ENCODE measurements at regions of chr19 and their contacts with region 1.

Region 1: GRCh38 chr19:49712397-49712859 is 21.5 kb downstream of the CPT1C start:
- DNase-seq: peak; percentile 86 to 96
- ATAC-seq: peak; percentile 80 to 87
- H3K4me3 ChIP-seq: peak overlapping the region; percentile 47
- H3K27ac ChIP-seq: peak overlapping the region; percentile 77 to 81
- H3K4me1 ChIP-seq: peaks cover 9% of the 10 kb centered on the region; the same call in 2 of the 3 replicates
- CTCF ChIP-seq: no peak
- EP300 ChIP-seq: no peak
- POLR2A ChIP-seq: no peak
- RAD21 ChIP-seq: no peak

Region 2: DNA sequence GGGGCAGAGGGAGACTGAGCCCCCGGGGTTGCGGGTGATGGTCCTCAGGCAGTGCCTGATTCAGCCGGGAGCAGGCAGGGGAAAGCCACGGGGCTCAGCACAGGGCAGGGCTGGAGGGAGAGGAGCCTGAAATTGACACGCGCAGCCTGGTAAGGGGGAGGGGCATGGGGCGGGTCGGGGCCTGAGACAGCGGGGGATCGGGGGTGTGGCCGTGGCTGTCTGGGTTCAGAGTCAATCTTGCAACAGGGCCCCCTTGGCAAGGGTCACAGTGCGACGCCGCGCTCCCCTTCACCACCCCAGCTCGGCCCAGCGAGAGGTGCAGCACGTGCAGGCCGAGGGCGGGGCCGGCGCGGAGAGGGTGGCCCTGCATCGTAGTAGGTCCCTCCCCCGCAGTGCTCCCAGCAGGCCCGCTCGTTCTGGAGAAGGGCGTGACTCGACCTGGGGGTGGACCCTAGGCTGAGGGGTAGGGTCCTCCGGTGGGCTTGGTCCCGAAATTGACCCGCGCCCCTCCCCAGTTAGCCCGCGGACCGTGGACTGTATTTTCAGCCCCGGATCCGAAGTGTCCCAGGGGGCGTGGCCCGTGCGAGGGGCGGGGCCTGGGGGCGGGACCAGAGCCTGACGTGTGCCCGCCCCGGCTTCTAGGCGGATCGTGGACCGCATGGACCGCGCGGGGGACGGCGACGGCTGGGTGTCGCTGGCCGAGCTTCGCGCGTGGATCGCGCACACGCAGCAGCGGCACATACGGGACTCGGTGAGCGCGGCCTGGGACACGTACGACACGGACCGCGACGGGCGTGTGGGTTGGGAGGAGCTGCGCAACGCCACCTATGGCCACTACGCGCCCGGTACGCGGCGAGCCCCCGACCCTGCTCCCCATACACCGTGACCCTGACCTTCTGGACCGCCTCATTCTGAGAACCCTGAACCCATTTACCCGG is 178.6 kb before region 1 on chr19:
- CTCF ChIA-PET with region 1: no interaction called
- POLR2A ChIA-PET with region 1: no interaction called
- DNase-seq: peak; percentile 79 to 85
- ATAC-seq: peak; percentile 91 to 92
- H3K4me3 ChIP-seq: peak overlapping the region; percentile 58
- H3K27ac ChIP-seq: peak overlapping the region; percentile 9 to 73; a peak in 3 of 6 replicates
- H3K4me1 ChIP-seq: peaks cover 7% of the 10 kb centered on the region; the same call in 1 of the 3 replicates
- CTCF ChIP-seq: peak; percentile 49
- EP300 ChIP-seq: no peak
- POLR2A ChIP-seq: no peak; the same call in 1 of the 2 replicates
- RAD21 ChIP-seq: no peak

Region 3: DNA sequence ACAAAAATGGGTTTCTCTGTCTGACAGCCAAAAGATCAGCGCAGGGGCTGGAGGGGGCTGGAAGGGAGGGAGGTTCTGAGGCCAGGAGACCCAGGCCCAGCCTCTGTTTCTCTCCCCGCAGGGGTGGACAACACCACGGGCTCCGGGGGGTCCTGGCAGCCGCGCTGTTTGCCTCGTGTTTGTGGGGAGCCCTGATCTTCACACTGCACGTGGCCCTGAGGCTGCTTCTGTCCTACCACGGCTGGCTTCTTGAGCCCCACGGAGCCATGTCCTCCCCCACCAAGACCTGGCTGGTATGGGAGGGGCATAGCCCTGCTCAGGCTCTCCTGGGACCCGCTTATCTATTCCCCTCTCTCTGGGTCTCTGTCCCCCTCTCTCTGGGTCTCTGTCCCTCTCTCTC is 11.9 kb before region 1 on chr19:
- CTCF ChIA-PET with region 1: interaction called, 29 read pairs
- POLR2A ChIA-PET with region 1: no interaction called
- DNase-seq: no peak
- ATAC-seq: peak; percentile 48 to 62; a peak in 4 of 6 replicates
- H3K4me3 ChIP-seq: no peak overlapping the region
- H3K27ac ChIP-seq: no peak overlapping the region
- H3K4me1 ChIP-seq: peaks cover 6% of the 10 kb centered on the region; the same call in 1 of the 3 replicates
- CTCF ChIP-seq: no peak
- EP300 ChIP-seq: no peak
- POLR2A ChIP-seq: no peak
- RAD21 ChIP-seq: no peak

Measured in A549 (cell line).